ENCODE measurements at regions of chr6 and their contacts with region 1.

Region 1: DNA sequence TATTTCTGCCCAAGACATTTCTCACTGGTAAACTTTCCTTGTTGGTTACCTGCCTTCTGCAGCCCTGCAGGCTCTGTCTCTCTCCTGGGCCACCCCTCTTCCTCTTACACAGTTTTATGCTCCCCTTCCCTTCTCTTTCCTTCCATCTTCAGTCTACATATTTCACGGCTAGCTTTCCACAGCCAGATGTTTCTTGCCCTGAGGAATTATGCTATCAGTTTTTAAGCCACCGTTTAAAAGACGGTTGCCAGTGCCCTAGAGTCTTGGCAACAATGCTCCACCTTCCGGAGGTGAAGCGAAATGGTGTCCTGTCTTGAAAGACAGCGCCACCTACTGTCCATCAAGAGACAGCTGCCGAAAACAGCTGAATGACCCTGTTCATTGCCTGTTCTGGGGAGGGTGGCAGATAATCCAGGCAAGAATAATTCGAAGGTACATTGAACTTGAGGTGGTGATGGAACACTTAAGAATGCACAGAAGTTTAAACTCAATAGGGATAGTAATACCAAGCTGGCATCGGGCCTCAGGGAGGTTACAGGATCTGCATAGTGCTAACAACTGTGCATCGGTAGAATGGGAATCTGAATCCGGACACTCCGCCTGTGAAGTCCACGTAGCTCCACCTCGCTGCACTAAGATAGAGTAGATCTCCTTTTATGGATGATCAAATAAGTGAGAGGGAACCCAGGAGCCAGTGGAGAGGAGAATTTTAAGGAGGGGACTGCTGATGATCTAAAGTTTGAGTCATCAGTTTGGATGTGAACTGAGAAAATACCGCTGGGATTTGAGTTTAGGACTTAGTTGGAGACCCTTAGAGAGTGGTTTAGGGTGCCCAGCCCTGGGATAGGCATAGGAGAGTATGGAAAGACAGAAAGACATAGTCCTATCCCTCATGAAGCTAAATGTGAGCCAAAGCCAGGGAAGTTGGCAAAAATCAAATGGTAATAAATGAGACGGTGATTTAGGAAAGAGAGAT is 4.8 kb upstream of the TRIM40 start:
- DNase-seq: peak; percentile 64
- ATAC-seq: peak; percentile 93
- H3K4me3 ChIP-seq: no peak overlapping the region
- H3K27ac ChIP-seq: peak overlapping the region; percentile 15; the same call in 1 of the 2 replicates
- H3K4me1 ChIP-seq: peaks cover 10% of the 10 kb centered on the region; the same call in 1 of the 2 replicates
- H3K27me3 ChIP-seq: peaks cover 19% of the 10 kb centered on the region
- CTCF ChIP-seq: peak; percentile 98

Region 2: GRCh38 chr6:28349892-28350737 is 1781.1 kb before region 1 on chr6 and contains the start of gene ZKSCAN3:
- CTCF ChIA-PET with region 1: no interaction called
- POLR2A ChIA-PET with region 1: no interaction called
- in situ Hi-C with region 1: no loop called
- intact Hi-C with region 1: no loop called
- DNase-seq: no peak
- ATAC-seq: peak; percentile 92
- H3K4me3 ChIP-seq: peak within 1 kb of the TSS; percentile 73 to 75
- H3K27ac ChIP-seq: peak within 1 kb of the TSS; percentile 93
- H3K4me1 ChIP-seq: peaks cover 27% of the 10 kb centered on the region
- H3K27me3 ChIP-seq: no peaks in the 10 kb centered on the region
- CTCF ChIP-seq: no peak
- total RNA-seq, gene ZKSCAN3: 7.0 TPM

Region 3: DNA sequence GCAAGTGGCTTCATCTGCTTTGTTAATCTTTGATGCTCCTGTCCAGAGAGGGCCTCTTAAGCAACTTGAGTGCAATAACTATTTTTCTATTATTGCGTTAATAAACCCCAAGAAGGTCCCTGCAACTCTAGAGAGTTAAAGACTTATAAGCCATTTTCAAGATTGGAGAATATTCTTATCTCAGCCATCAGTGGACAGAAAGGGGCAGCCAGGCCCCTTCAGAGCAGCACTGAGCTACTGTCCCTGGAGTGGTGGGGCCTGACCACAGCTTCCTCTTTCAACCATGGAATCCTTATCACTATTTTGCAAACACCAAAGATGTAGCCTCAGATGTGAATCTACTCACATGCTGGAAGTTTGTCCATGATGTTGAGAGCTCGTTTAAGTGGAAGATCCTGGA is 640.6 kb before region 1 on chr6:
- CTCF ChIA-PET with region 1: no interaction called
- POLR2A ChIA-PET with region 1: no interaction called
- in situ Hi-C with region 1: no loop called
- intact Hi-C with region 1: no loop called
- DNase-seq: no peak
- ATAC-seq: no peak
- H3K4me3 ChIP-seq: no peak overlapping the region
- H3K27ac ChIP-seq: no peak overlapping the region
- H3K4me1 ChIP-seq: no peaks in the 10 kb centered on the region
- H3K27me3 ChIP-seq: no peaks in the 10 kb centered on the region
- CTCF ChIP-seq: no peak

Region 4: DNA sequence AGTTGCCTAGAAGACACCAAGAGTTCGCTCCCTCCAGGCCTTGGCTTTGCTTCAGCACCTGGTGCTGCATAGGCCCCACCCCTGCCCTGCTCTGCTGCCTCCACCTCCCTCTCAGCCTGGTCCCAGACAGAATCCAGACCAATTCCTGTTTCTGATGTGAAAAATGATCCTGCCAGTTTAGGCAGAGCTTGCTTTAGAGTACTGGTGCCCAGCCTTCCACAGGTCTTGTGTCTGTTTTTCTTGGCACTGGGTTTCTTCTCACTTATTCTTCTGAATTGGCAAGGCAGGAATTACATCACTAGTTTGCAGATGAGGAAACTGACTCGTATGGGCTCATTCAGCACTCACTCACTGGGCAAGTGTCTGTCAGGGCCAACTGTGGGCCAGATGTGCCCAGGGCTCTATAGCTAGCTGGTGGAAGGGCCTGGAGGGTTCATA is 135.8 kb before region 1 on chr6:
- CTCF ChIA-PET with region 1: no interaction called
- POLR2A ChIA-PET with region 1: interaction called, 14 read pairs
- in situ Hi-C with region 1: no loop called
- intact Hi-C with region 1: no loop called
- DNase-seq: no peak
- ATAC-seq: no peak
- H3K4me3 ChIP-seq: no peak overlapping the region
- H3K27ac ChIP-seq: no peak overlapping the region
- H3K4me1 ChIP-seq: no peaks in the 10 kb centered on the region
- H3K27me3 ChIP-seq: no peaks in the 10 kb centered on the region
- CTCF ChIP-seq: no peak

Region 5: GRCh38 chr6:30272017-30272416 is 140.8 kb after region 1 on chr6:
- CTCF ChIA-PET with region 1: no interaction called
- POLR2A ChIA-PET with region 1: no interaction called
- in situ Hi-C with region 1: no loop called
- intact Hi-C with region 1: no loop called
- DNase-seq: no peak
- ATAC-seq: no peak
- H3K4me3 ChIP-seq: no peak overlapping the region
- H3K27ac ChIP-seq: no peak overlapping the region
- H3K4me1 ChIP-seq: no peaks in the 10 kb centered on the region
- H3K27me3 ChIP-seq: no peaks in the 10 kb centered on the region
- CTCF ChIP-seq: no peak

Region 6: DNA sequence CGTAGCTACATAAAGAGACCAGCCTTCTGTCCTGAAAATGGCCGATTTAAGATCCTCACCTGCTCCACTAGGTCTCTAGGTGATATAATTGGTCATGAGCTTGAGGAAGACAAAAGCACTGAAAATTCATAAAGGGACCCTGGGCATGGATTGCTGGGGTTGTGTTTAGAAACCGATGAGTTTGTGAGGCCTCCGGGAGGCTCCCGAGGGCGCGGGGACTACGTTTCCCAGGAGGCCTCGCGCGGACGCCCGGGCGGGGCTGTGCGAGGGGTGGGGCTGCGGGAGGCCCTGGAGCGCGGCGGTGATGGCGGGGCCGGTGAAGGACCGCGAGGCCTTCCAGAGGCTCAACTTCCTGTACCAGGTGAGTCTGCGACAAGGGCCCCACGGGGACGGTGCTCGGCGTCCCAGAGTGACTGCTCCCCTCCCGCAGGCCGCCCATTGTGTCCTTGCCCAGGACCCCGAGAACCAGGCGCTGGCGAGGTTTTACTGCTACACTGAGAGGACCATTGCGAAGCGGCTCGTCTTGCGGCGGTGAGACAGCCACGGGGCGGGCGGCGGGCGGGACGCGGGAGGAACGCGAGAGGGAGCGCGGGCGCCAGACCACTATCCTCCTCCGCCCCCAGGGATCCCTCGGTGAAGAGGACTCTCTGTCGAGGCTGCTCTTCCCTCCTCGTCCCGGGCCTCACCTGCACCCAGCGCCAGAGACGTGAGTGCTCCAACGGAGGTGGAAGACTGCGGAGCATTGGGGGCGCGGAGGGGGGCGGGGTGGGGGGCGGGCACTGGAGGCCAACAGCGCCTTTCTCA is 213.9 kb after region 1 on chr6 and contains the start of gene RPP21:
- CTCF ChIA-PET with region 1: no interaction called
- POLR2A ChIA-PET with region 1: no interaction called
- in situ Hi-C with region 1: no loop called
- intact Hi-C with region 1: no loop called
- DNase-seq: no peak
- ATAC-seq: peak; percentile 99
- H3K4me3 ChIP-seq: peak within 1 kb of the TSS; percentile 75 to 87
- H3K27ac ChIP-seq: peak within 1 kb of the TSS; percentile 78
- H3K4me1 ChIP-seq: peaks cover 5% of the 10 kb centered on the region; the same call in 1 of the 2 replicates
- H3K27me3 ChIP-seq: no peaks in the 10 kb centered on the region
- CTCF ChIP-seq: no peak
- total RNA-seq, gene RPP21: 81.3 TPM